ENCODE measurements at regions of chr3 and their contacts with region 1.

Region 1: GRCh38 chr3:67490658-67491057 is 163.8 kb downstream of the SUCLG2 start:
- DNase-seq: no peak
- ATAC-seq: no peak
- H3K4me3 ChIP-seq: no peak overlapping the region
- H3K4me3 Mint-ChIP-seq: no peak overlapping the region
- H3K27ac ChIP-seq: no peak overlapping the region
- H3K27ac Mint-ChIP-seq: peak overlapping the region in 1 of 2 donors; percentile 53
- H3K4me1 ChIP-seq: no peaks in the 10 kb centered on the region
- H3K4me1 Mint-ChIP-seq: peaks cover 5 to 26% (median 5%) of the 10 kb centered on the region in 3 donors
- H3K27me3 ChIP-seq: no peaks in the 10 kb centered on the region
- H3K27me3 Mint-ChIP-seq: no peaks in the 10 kb centered on the region

Region 2: GRCh38 chr3:68931406-68932149 is 1440.9 kb after region 1 on chr3:
- CTCF ChIA-PET with region 1: no interaction called
- POLR2A ChIA-PET with region 1: interaction called in 1 of 2 experiments, 12 read pairs
- DNase-seq: no peak
- ATAC-seq: no peak
- H3K4me3 ChIP-seq: no peak overlapping the region
- H3K4me3 Mint-ChIP-seq: peak overlapping the region in 1 of 3 donors; percentile 47
- H3K27ac ChIP-seq: no peak overlapping the region
- H3K27ac Mint-ChIP-seq: no peak overlapping the region
- H3K4me1 ChIP-seq: peaks cover 0 to 7% of the 10 kb centered on the region in 2 experiments
- H3K4me1 Mint-ChIP-seq: peaks cover 6 to 13% (median 10%) of the 10 kb centered on the region in 3 donors
- H3K27me3 ChIP-seq: peaks cover 24 to 42% of the 10 kb centered on the region in 2 experiments
- H3K27me3 Mint-ChIP-seq: peaks cover 65 to 66% of the 10 kb centered on the region in 2 donors

Measured in T-cell (primary cell).